Activated naive CD4-positive, alpha-beta T cell treated with anti-CD3 and anti-CD28 coated beads, Interleukin-2, amount 10 ng/mL, durations not matched to agents 7 days and 5 days (primary cell): ENCODE measurements at regions of chr10 and their contacts with region 1.

Region 1: GRCh38 chr10:13536674-13537366 is 8.0 kb upstream of the BEND7 start:
- DNase-seq: peak; percentile 35
- H3K4me3 Mint-ChIP-seq: no peak overlapping the region
- H3K27ac Mint-ChIP-seq: no peak overlapping the region
- H3K4me1 Mint-ChIP-seq: no peaks in the 10 kb centered on the region
- H3K27me3 Mint-ChIP-seq: peaks cover 30% of the 10 kb centered on the region

Region 2: DNA sequence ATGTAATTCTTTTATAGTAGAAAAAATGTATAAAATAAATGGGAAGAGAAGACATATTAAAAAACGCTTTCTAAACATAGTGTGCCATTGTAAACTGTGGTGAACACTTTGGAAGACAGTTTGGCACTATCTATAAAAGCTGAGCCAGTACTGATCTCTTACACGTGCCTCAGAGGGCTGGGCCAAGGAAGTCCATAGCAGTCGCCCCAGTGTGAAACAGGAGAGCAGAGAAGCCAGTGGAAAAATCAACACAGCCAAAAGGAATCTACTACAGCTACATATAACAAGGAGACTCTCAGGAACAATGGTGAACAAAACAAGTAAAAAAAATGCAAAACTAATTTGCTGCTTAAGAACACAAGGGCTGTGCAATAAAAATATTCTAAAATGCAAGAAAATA is 209.3 kb before region 1 on chr10:
- CTCF ChIA-PET with region 1: no interaction called
- DNase-seq: no peak
- H3K4me3 Mint-ChIP-seq: no peak overlapping the region
- H3K27ac Mint-ChIP-seq: no peak overlapping the region
- H3K4me1 Mint-ChIP-seq: no peaks in the 10 kb centered on the region
- H3K27me3 Mint-ChIP-seq: no peaks in the 10 kb centered on the region

Region 3: GRCh38 chr10:13371897-13372470 is 164.8 kb before region 1 on chr10:
- CTCF ChIA-PET with region 1: interaction called, 13 read pairs
- DNase-seq: peak; percentile 80
- H3K4me3 Mint-ChIP-seq: no peak overlapping the region
- H3K27ac Mint-ChIP-seq: no peak overlapping the region
- H3K4me1 Mint-ChIP-seq: no peaks in the 10 kb centered on the region
- H3K27me3 Mint-ChIP-seq: peaks cover 4% of the 10 kb centered on the region

Region 4: DNA sequence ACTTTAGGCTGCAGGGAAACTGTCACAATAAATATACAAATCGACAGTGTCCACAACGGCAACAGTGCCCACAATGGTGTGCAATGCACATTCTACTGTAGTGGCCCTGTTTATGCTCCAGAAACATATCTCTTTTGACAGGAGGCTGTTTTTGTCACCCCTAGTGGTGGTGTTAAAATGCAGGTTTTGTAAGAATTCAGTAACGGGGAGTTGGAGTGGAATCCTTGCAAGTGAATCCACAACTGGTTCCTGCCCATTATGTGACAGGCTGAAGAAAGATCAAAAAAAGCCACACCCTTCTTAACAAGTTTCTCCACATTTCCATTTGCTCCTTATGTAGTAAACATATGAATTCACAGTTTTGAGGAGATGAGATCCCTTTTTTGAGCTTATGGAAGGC is 66.5 kb before region 1 on chr10:
- CTCF ChIA-PET with region 1: no interaction called
- DNase-seq: no peak
- H3K4me3 Mint-ChIP-seq: no peak overlapping the region
- H3K27ac Mint-ChIP-seq: no peak overlapping the region
- H3K4me1 Mint-ChIP-seq: no peaks in the 10 kb centered on the region
- H3K27me3 Mint-ChIP-seq: no peaks in the 10 kb centered on the region